ENCODE measurements at regions of chrX and their contacts with region 1.

Region 1: GRCh38 chrX:39261446-39262147 is 460.3 kb downstream of the MID1IP1 start:
- DNase-seq: peak in 7 of 9 donors; percentile 8 to 49 (median 31)
- ATAC-seq: peak; percentile 47
- H3K4me3 ChIP-seq: no peak overlapping the region
- H3K4me3 Mint-ChIP-seq: no peak overlapping the region
- H3K27ac ChIP-seq: no peak overlapping the region
- H3K27ac Mint-ChIP-seq: peak overlapping the region in 2 of 9 donors; percentile 14 to 17
- H3K4me1 ChIP-seq: no peaks in the 10 kb centered on the region
- H3K4me1 Mint-ChIP-seq: peaks cover 0 to 28% (median 10%) of the 10 kb centered on the region in 7 donors
- H3K27me3 ChIP-seq: no peaks in the 10 kb centered on the region
- H3K27me3 Mint-ChIP-seq: no peaks in the 10 kb centered on the region

Region 2: DNA sequence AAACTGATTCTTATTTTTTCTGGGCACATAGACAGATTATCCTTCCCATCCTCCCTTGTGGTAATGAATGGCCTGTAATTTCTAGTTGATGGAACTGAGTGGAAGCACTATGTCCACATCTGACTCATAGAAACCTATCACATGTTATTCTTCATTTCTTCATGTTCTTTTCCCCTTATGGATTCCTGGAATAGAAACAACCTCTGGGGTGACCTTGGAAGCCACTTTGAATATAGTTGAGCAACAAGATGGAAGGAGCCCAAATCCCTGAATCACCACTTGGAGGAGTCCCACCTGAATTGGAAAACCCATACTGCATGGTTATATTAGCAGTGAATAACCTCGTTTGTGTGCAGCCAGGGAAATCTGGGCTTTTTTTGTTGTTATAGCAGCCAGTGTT is 322.5 kb before region 1 on chrX:
- CTCF ChIA-PET with region 1: no interaction called
- POLR2A ChIA-PET with region 1: no interaction called
- intact Hi-C with region 1: no loop called
- DNase-seq: no peak
- ATAC-seq: no peak
- H3K4me3 ChIP-seq: no peak overlapping the region
- H3K4me3 Mint-ChIP-seq: no peak overlapping the region
- H3K27ac ChIP-seq: no peak overlapping the region
- H3K27ac Mint-ChIP-seq: no peak overlapping the region
- H3K4me1 ChIP-seq: no peaks in the 10 kb centered on the region
- H3K4me1 Mint-ChIP-seq: no peaks in the 10 kb centered on the region
- H3K27me3 ChIP-seq: no peaks in the 10 kb centered on the region
- H3K27me3 Mint-ChIP-seq: no peaks in the 10 kb centered on the region

Region 3: GRCh38 chrX:39170464-39170863 is 91.1 kb before region 1 on chrX:
- CTCF ChIA-PET with region 1: no interaction called
- POLR2A ChIA-PET with region 1: no interaction called
- intact Hi-C with region 1: no loop called
- DNase-seq: no peak
- ATAC-seq: no peak
- H3K4me3 ChIP-seq: no peak overlapping the region
- H3K4me3 Mint-ChIP-seq: no peak overlapping the region
- H3K27ac ChIP-seq: no peak overlapping the region
- H3K27ac Mint-ChIP-seq: no peak overlapping the region
- H3K4me1 ChIP-seq: peaks cover 0 to 11% of the 10 kb centered on the region in 2 donors
- H3K4me1 Mint-ChIP-seq: peaks cover 0 to 27% (median 20%) of the 10 kb centered on the region in 7 donors
- H3K27me3 ChIP-seq: no peaks in the 10 kb centered on the region
- H3K27me3 Mint-ChIP-seq: no peaks in the 10 kb centered on the region

Region 4: GRCh38 chrX:39309018-39309635 is 47.5 kb after region 1 on chrX:
- CTCF ChIA-PET with region 1: interaction called, 4 read pairs
- POLR2A ChIA-PET with region 1: interaction called, 4 read pairs
- intact Hi-C with region 1: loop called (anchors 1 to 5 kb)
- DNase-seq: peak in 7 of 9 donors; percentile 23 to 81 (median 43)
- ATAC-seq: peak; percentile 83
- H3K4me3 ChIP-seq: peak overlapping the region; percentile 41
- H3K4me3 Mint-ChIP-seq: peak overlapping the region; percentile 33 to 91 (median 76)
- H3K27ac ChIP-seq: peak overlapping the region; percentile 84
- H3K27ac Mint-ChIP-seq: peak overlapping the region; percentile 95 to 100 (median 99)
- H3K4me1 ChIP-seq: peaks cover 18 to 42% of the 10 kb centered on the region in 2 donors
- H3K4me1 Mint-ChIP-seq: peaks cover 28 to 81% (median 74%) of the 10 kb centered on the region in 7 donors
- H3K27me3 ChIP-seq: no peaks in the 10 kb centered on the region
- H3K27me3 Mint-ChIP-seq: no peaks in the 10 kb centered on the region

Region 5: GRCh38 chrX:39327255-39327654 is 65.7 kb after region 1 on chrX:
- CTCF ChIA-PET with region 1: no interaction called
- POLR2A ChIA-PET with region 1: no interaction called
- intact Hi-C with region 1: loop called in 1 of 2 experiments (anchors 5 kb)
- DNase-seq: peak in 7 of 9 donors; percentile 34 to 69 (median 42)
- ATAC-seq: peak; percentile 64
- H3K4me3 ChIP-seq: peak overlapping the region; percentile 30
- H3K4me3 Mint-ChIP-seq: peak overlapping the region in 8 of 10 donors; percentile 29 to 75 (median 52)
- H3K27ac ChIP-seq: peak overlapping the region; percentile 33
- H3K27ac Mint-ChIP-seq: peak overlapping the region; percentile 40 to 92 (median 79)
- H3K4me1 ChIP-seq: peaks cover 0 to 13% of the 10 kb centered on the region in 2 donors
- H3K4me1 Mint-ChIP-seq: peaks cover 15 to 61% (median 52%) of the 10 kb centered on the region in 7 donors
- H3K27me3 ChIP-seq: no peaks in the 10 kb centered on the region
- H3K27me3 Mint-ChIP-seq: no peaks in the 10 kb centered on the region

Region 6: DNA sequence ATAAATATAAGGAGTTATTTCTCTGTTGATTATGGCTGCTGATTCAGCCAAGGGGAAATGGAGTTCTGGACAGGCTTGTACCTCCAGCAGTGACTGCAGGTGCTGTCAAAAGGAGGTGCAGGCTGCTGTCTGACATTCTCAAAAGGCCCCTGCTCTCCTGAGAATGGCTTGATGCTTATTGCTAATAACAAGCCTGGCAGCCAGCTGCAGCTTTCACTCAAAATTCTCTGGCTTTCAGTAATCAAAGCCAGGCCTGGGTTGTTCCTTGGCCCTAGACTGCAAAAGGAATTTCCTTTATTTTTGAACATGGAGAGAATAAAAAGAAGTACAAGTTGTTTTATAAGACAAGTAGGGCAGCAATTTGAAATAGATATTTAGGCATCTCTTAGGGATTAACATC is 115.6 kb after region 1 on chrX:
- CTCF ChIA-PET with region 1: no interaction called
- POLR2A ChIA-PET with region 1: no interaction called
- intact Hi-C with region 1: loop called in 1 of 2 experiments (anchors 10 kb)
- DNase-seq: no peak
- ATAC-seq: no peak
- H3K4me3 ChIP-seq: no peak overlapping the region
- H3K4me3 Mint-ChIP-seq: no peak overlapping the region
- H3K27ac ChIP-seq: no peak overlapping the region
- H3K27ac Mint-ChIP-seq: peak overlapping the region in 1 of 9 donors; percentile 28
- H3K4me1 ChIP-seq: no peaks in the 10 kb centered on the region
- H3K4me1 Mint-ChIP-seq: peaks cover 0 to 2% (median 0%) of the 10 kb centered on the region in 7 donors
- H3K27me3 ChIP-seq: no peaks in the 10 kb centered on the region
- H3K27me3 Mint-ChIP-seq: no peaks in the 10 kb centered on the region

Region 7: DNA sequence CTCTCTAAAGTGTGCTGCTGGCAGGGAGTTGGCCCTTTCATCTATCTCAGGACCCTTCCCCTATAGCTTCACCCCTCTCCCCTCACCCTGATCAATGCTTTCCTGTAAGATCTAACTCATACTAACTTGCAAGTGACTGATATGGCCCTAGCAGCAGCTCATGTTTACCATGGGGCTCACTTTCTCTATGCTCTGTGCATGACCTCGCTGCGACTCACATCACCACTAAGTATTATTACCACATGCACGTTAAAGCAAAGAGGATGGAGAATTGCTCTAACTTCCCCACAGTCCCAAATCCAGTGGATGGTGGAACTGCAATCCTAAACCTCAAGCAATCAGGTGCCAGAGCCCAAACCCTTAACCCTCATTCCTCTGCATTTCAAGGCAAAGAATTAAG is 166.3 kb after region 1 on chrX:
- CTCF ChIA-PET with region 1: no interaction called
- POLR2A ChIA-PET with region 1: no interaction called
- intact Hi-C with region 1: loop called in 1 of 2 experiments (anchors 5 kb)
- DNase-seq: peak in 1 of 9 donors; percentile 32
- ATAC-seq: no peak
- H3K4me3 ChIP-seq: no peak overlapping the region
- H3K4me3 Mint-ChIP-seq: peak overlapping the region in 4 of 10 donors; percentile 13 to 68 (median 30)
- H3K27ac ChIP-seq: no peak overlapping the region
- H3K27ac Mint-ChIP-seq: peak overlapping the region in 8 of 9 donors; percentile 6 to 87 (median 76)
- H3K4me1 ChIP-seq: peaks cover 0 to 17% of the 10 kb centered on the region in 2 donors
- H3K4me1 Mint-ChIP-seq: peaks cover 11 to 54% (median 32%) of the 10 kb centered on the region in 7 donors
- H3K27me3 ChIP-seq: no peaks in the 10 kb centered on the region
- H3K27me3 Mint-ChIP-seq: no peaks in the 10 kb centered on the region

Region 8: DNA sequence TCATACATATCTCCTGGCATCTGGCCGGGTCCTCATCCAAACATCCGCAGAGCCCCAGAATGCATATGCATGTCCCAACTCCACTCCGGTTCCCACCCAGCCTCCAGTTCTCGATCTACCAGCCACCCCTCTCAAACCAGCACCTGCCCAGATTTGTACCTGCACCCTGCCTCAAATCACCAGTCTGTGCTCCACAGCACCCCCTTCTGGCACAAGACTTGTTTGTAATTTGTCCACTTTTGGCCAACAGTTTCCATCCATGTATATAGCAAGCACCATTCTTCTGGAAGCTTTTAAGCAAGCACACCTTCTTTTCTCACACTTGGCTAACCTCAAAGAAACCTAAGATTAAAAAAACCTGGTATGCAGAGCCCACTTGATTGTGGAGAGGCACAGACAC is 183.7 kb after region 1 on chrX:
- CTCF ChIA-PET with region 1: no interaction called
- POLR2A ChIA-PET with region 1: no interaction called
- intact Hi-C with region 1: loop called (anchors 1 kb)
- DNase-seq: peak in 4 of 9 donors; percentile 7 to 28 (median 25)
- ATAC-seq: no peak
- H3K4me3 ChIP-seq: no peak overlapping the region
- H3K4me3 Mint-ChIP-seq: no peak overlapping the region
- H3K27ac ChIP-seq: no peak overlapping the region
- H3K27ac Mint-ChIP-seq: peak overlapping the region in 2 of 9 donors; percentile 10 to 50
- H3K4me1 ChIP-seq: peaks cover 3 to 4% of the 10 kb centered on the region in 2 donors
- H3K4me1 Mint-ChIP-seq: peaks cover 19 to 46% (median 32%) of the 10 kb centered on the region in 7 donors
- H3K27me3 ChIP-seq: no peaks in the 10 kb centered on the region
- H3K27me3 Mint-ChIP-seq: no peaks in the 10 kb centered on the region

Region 9: DNA sequence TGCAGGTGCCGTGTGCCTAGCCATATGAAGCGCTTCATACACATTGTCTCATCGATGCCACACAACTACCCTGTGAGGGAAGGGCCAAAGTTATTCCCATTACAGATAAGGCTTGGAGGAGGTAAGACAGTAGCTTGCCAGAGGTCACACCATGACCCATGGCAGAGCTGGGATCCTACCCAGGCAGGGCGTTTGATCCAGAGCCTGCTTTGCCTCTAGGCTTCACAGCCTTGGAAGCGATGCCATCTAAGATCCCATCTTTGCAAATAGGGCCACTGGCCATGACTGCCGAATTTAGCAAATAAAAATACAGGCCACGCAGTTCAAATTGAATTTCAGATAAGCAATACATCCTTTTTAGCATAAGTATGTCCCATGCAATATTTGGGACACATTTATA is 478.0 kb after region 1 on chrX:
- CTCF ChIA-PET with region 1: no interaction called
- POLR2A ChIA-PET with region 1: no interaction called
- intact Hi-C with region 1: no loop called
- DNase-seq: no peak
- ATAC-seq: no peak
- H3K4me3 ChIP-seq: no peak overlapping the region
- H3K4me3 Mint-ChIP-seq: no peak overlapping the region
- H3K27ac ChIP-seq: no peak overlapping the region
- H3K27ac Mint-ChIP-seq: no peak overlapping the region
- H3K4me1 ChIP-seq: no peaks in the 10 kb centered on the region
- H3K4me1 Mint-ChIP-seq: peaks cover 0 to 3% (median 0%) of the 10 kb centered on the region in 7 donors
- H3K27me3 ChIP-seq: no peaks in the 10 kb centered on the region
- H3K27me3 Mint-ChIP-seq: no peaks in the 10 kb centered on the region

Region 10: GRCh38 chrX:40468033-40468846 is 1206.6 kb after region 1 on chrX:
- CTCF ChIA-PET with region 1: interaction called, 3 read pairs
- POLR2A ChIA-PET with region 1: no interaction called
- intact Hi-C with region 1: loop called in 1 of 2 experiments (anchors 5 kb)
- DNase-seq: peak in 5 of 9 donors; percentile 22 to 40 (median 31)
- ATAC-seq: peak; percentile 72
- H3K4me3 ChIP-seq: no peak overlapping the region
- H3K4me3 Mint-ChIP-seq: peak overlapping the region in 6 of 10 donors; percentile 8 to 73 (median 38)
- H3K27ac ChIP-seq: no peak overlapping the region
- H3K27ac Mint-ChIP-seq: peak overlapping the region in 2 of 9 donors; percentile 14 to 69
- H3K4me1 ChIP-seq: peaks cover 0 to 13% of the 10 kb centered on the region in 2 donors
- H3K4me1 Mint-ChIP-seq: peaks cover 14 to 40% (median 33%) of the 10 kb centered on the region in 7 donors
- H3K27me3 ChIP-seq: no peaks in the 10 kb centered on the region
- H3K27me3 Mint-ChIP-seq: no peaks in the 10 kb centered on the region